OCI-LY7 (cell line): ENCODE measurements at regions of chr11 and their contacts with region 1.

Region 1: GRCh38 chr11:67382276-67383136 is 9.1 kb upstream of the CLCF1 start:
- DNase-seq: peak; percentile 88
- H3K4me3 ChIP-seq: no peak overlapping the region
- H3K27ac ChIP-seq: no peak overlapping the region
- H3K4me1 ChIP-seq: peaks cover 29% of the 10 kb centered on the region
- CTCF ChIP-seq: peak; percentile 97

Region 2: GRCh38 chr11:67082035-67082791 is 300.3 kb before region 1 on chr11:
- CTCF ChIA-PET with region 1: no interaction called
- POLR2A ChIA-PET with region 1: no interaction called
- intact Hi-C with region 1: loop called (anchors 5 kb)
- DNase-seq: no peak
- H3K4me3 ChIP-seq: no peak overlapping the region
- H3K27ac ChIP-seq: no peak overlapping the region
- H3K4me1 ChIP-seq: peaks cover 12% of the 10 kb centered on the region
- CTCF ChIP-seq: no peak

Region 3: DNA sequence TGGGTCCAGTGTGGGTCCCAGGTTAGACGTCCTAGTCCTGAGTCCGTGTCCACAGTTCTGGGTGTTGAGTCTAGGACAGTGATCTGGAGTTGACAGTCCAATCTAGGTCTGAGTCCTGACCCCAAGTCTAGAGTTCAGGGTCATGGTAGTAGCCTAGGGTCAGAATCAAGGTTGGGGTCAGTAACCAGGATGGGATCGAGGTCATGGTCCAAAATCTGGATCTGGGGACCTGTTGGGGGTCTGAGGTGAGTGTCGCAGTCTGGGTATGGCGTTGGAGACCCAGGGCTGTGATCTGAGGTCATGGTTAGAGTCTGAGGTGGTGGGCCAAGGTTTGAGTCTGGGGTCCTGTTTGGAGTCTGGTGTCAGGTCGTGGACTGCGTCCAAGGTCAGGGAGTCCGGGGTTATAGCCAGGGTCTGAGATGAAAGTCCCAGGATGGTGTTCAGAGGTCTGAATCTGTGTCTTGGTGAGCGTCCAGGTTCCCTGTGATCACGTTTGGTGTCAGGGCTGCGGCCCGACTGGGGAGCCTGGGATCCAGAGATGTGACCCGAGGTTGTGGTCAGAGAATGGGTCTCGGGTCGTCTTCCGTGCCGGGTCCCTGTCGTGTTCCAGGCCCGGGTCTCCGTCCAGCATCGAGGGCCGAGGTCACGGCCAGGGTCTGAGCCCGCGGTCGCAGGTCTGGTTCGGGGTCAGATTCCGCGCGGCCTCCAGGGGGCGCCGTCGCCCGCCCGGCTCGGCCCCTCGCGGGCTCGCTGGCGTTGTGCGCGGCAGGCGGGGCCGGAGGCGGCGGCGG is 116.7 kb before region 1 on chr11:
- CTCF ChIA-PET with region 1: no interaction called
- POLR2A ChIA-PET with region 1: no interaction called
- intact Hi-C with region 1: loop called (anchors 1 kb)
- DNase-seq: peak; percentile 82
- H3K4me3 ChIP-seq: peak overlapping the region; percentile 50
- H3K27ac ChIP-seq: peak overlapping the region; percentile 36
- H3K4me1 ChIP-seq: peaks cover 74% of the 10 kb centered on the region
- CTCF ChIP-seq: peak; percentile 72

Region 4: DNA sequence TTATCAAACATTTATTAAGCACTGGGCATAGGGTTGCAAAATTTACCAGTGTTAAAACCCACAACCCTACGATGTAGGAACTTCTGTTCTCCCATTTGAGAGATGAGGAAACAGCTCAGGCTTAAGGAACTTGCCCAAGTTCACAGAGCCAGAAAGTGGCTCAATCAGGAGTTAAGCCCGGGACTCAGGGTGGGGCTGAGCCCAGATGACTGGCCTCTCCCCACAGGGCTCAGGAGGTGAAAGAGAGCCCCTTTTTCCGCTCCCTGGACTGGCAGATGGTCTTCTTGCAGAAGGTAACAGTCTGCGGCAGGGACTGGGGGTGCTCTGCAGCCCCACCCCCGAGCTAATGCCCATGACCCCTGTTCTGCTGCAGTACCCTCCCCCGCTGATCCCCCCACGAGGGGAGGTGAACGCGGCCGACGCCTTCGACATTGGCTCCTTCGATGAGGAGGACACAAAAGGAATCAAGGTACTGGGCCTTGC is 99.0 kb before region 1 on chr11:
- CTCF ChIA-PET with region 1: no interaction called
- POLR2A ChIA-PET with region 1: no interaction called
- intact Hi-C with region 1: no loop called
- DNase-seq: no peak
- H3K4me3 ChIP-seq: no peak overlapping the region
- H3K27ac ChIP-seq: no peak overlapping the region
- H3K4me1 ChIP-seq: peaks cover 33% of the 10 kb centered on the region
- CTCF ChIP-seq: no peak

Region 5: GRCh38 chr11:67317205-67317887 is 65.2 kb before region 1 on chr11:
- CTCF ChIA-PET with region 1: no interaction called
- POLR2A ChIA-PET with region 1: no interaction called
- intact Hi-C with region 1: loop called (anchors 1 kb)
- DNase-seq: peak; percentile 99
- H3K4me3 ChIP-seq: peak overlapping the region; percentile 78
- H3K27ac ChIP-seq: peak overlapping the region; percentile 93
- H3K4me1 ChIP-seq: peaks cover 13% of the 10 kb centered on the region
- CTCF ChIP-seq: peak; percentile 89

Region 6: GRCh38 chr11:67353317-67354074 is 29.0 kb before region 1 on chr11 and contains the start of gene POLD4:
- CTCF ChIA-PET with region 1: interaction called, 136 read pairs
- POLR2A ChIA-PET with region 1: interaction called, 106 read pairs
- intact Hi-C with region 1: loop called (anchors 1 kb)
- DNase-seq: peak; percentile 99
- H3K4me3 ChIP-seq: peak within 1 kb of the TSS; percentile 77
- H3K27ac ChIP-seq: peak within 1 kb of the TSS; percentile 93
- H3K4me1 ChIP-seq: peaks cover 78% of the 10 kb centered on the region
- CTCF ChIP-seq: no peak
- total RNA-seq, gene POLD4: 146 and 153 TPM in 2 replicates